GM12878 (cell line): ENCODE measurements at regions of chr3 and their contacts with region 1.

Region 1: GRCh38 chr3:190101320-190102011 is 19.2 kb downstream of the P3H2 start:
- DNase-seq: no peak
- ATAC-seq: peak; percentile 42
- H3K4me3 ChIP-seq: no peak overlapping the region
- H3K27ac ChIP-seq: peak overlapping the region; percentile 41
- H3K4me1 ChIP-seq: no peaks in the 10 kb centered on the region
- H3K27me3 ChIP-seq: no peaks in the 10 kb centered on the region
- CTCF ChIP-seq: no peak
- EP300 ChIP-seq: no peak
- POLR2A ChIP-seq: no peak
- RAD21 ChIP-seq: no peak

Region 2: DNA sequence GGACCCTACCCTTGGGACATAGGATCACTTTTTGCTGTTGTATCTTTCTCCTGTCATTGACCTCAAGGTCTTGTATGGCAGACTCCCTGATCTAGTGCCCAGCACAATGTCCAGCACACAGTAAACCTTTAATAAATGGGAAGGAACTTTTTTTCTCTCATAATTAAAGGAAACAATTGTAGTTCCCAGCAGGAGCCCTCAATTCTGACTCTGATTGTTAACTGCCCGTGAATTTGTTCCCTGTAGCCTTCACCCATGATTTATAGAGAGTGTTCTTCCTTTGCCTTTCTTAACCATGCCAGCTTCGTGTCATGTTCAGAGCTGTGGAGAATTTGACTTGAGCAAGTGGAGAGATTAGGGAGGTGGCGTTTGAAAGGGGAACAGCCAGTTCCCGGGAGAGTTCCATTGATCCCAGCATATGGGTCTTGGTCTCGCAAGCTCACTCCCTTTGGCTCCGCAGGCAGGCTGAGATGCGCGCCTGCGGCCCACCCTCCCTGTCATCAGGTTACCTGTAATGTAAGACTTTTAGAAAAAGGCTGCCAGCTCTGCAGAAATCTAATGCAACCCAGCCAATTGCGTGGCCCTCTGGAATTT is 287.7 kb before region 1 on chr3:
- CTCF ChIA-PET with region 1: no interaction called
- POLR2A ChIA-PET with region 1: no interaction called
- RAD21 ChIA-PET with region 1: no interaction called
- SMC1A ChIA-PET with region 1: no interaction called
- in situ Hi-C with region 1: no loop called
- intact Hi-C with region 1: no loop called
- DNase-seq: no peak
- ATAC-seq: no peak
- H3K4me3 ChIP-seq: no peak overlapping the region
- H3K27ac ChIP-seq: no peak overlapping the region
- H3K4me1 ChIP-seq: no peaks in the 10 kb centered on the region
- H3K27me3 ChIP-seq: no peaks in the 10 kb centered on the region
- CTCF ChIP-seq: no peak
- EP300 ChIP-seq: no peak
- POLR2A ChIP-seq: no peak
- RAD21 ChIP-seq: no peak

Region 3: GRCh38 chr3:190197346-190197763 is 95.9 kb after region 1 on chr3:
- CTCF ChIA-PET with region 1: no interaction called
- POLR2A ChIA-PET with region 1: no interaction called
- RAD21 ChIA-PET with region 1: interaction called, 4 read pairs
- SMC1A ChIA-PET with region 1: interaction called, 6 read pairs
- in situ Hi-C with region 1: no loop called
- intact Hi-C with region 1: loop called (anchors 5 kb)
- DNase-seq: no peak
- ATAC-seq: peak; percentile 50
- H3K4me3 ChIP-seq: no peak overlapping the region
- H3K27ac ChIP-seq: no peak overlapping the region
- H3K4me1 ChIP-seq: no peaks in the 10 kb centered on the region
- H3K27me3 ChIP-seq: no peaks in the 10 kb centered on the region
- CTCF ChIP-seq: no peak
- EP300 ChIP-seq: no peak
- POLR2A ChIP-seq: no peak
- RAD21 ChIP-seq: no peak